ENCODE measurements at regions of chr13 and their contacts with region 1.

Region 1: GRCh38 chr13:68927387-68928026 is 1180.1 kb upstream of the ATXN8OS start:
- DNase-seq: peak in 1 of 2 experiments; percentile 43
- H3K4me3 ChIP-seq: no peak overlapping the region
- H3K27ac ChIP-seq: no peak overlapping the region
- H3K4me1 ChIP-seq: no peaks in the 10 kb centered on the region
- H3K27me3 ChIP-seq: no peaks in the 10 kb centered on the region
- CTCF ChIP-seq: peak; percentile 45 to 87 (median 82)
- EP300 ChIP-seq: no peak
- POLR2A ChIP-seq: no peak
- RAD21 ChIP-seq: peak; percentile 99

Region 2: GRCh38 chr13:68810660-68811059 is 116.8 kb before region 1 on chr13:
- CTCF ChIA-PET with region 1: interaction called, 10 read pairs
- POLR2A ChIA-PET with region 1: no interaction called
- DNase-seq: no peak
- H3K4me3 ChIP-seq: no peak overlapping the region
- H3K27ac ChIP-seq: no peak overlapping the region
- H3K4me1 ChIP-seq: no peaks in the 10 kb centered on the region
- H3K27me3 ChIP-seq: no peaks in the 10 kb centered on the region
- CTCF ChIP-seq: peak in 1 of 3 experiments; percentile 56; a peak in 2 of 4 replicates
- EP300 ChIP-seq: no peak
- POLR2A ChIP-seq: no peak
- RAD21 ChIP-seq: peak; percentile 80 to 81

Region 3: DNA sequence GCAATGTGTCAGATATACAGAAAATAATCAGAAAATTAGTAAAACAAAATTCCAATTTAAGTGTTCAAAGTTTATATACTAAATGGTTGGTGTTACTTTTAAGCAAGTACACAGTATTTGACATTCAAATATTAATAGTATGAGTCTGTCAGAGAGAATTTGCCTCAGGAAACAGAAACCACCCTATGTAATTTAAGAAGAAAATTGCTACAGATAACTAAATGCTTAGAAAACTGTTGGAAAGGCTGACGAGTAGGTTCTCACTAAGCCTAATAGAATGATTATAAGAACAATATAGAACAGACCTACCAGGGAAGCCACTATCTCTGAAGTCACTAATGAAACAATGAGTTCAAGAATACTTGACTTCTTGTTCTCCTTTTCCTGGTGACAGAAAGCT is 47.7 kb before region 1 on chr13:
- CTCF ChIA-PET with region 1: no interaction called
- POLR2A ChIA-PET with region 1: no interaction called
- DNase-seq: no peak
- H3K4me3 ChIP-seq: no peak overlapping the region
- H3K27ac ChIP-seq: no peak overlapping the region
- H3K4me1 ChIP-seq: no peaks in the 10 kb centered on the region
- H3K27me3 ChIP-seq: no peaks in the 10 kb centered on the region
- CTCF ChIP-seq: no peak
- EP300 ChIP-seq: no peak
- POLR2A ChIP-seq: no peak
- RAD21 ChIP-seq: no peak

Region 4: GRCh38 chr13:68948586-68948985 is 21.1 kb after region 1 on chr13:
- CTCF ChIA-PET with region 1: no interaction called
- POLR2A ChIA-PET with region 1: no interaction called
- DNase-seq: no peak
- H3K4me3 ChIP-seq: no peak overlapping the region
- H3K27ac ChIP-seq: no peak overlapping the region
- H3K4me1 ChIP-seq: no peaks in the 10 kb centered on the region
- H3K27me3 ChIP-seq: peaks cover 0 to 2% (median 0%) of the 10 kb centered on the region in 4 experiments; a peak in 1 of 7 replicates
- CTCF ChIP-seq: no peak
- EP300 ChIP-seq: no peak
- POLR2A ChIP-seq: no peak
- RAD21 ChIP-seq: no peak

Measured in H1 (cell line).